ENCODE measurements at regions of chr6 and their contacts with region 1.

Region 1: DNA sequence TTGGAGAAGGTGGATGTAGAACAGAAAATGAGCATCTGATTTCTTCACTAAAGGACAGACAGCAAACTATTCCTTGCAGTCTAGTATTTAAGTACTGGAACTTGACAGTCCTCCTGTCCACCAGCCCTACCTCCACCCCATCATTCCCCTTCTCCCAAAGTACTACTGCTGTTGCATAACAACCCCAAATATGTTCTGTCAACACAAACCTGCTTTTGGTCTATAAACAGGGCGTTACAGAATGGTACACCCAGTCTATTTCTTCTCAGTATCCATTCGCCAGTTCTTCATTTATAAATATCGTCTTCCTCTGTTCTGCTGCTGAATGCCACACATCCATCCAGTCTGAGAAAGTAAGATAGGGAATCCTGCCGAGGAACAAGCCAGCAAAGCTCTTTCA is 27.7 kb upstream of the SLC22A1 start:
- DNase-seq: no peak
- ATAC-seq: no peak
- H3K4me3 Mint-ChIP-seq: no peak overlapping the region
- H3K27ac Mint-ChIP-seq: no peak overlapping the region
- H3K4me1 Mint-ChIP-seq: no peaks in the 10 kb centered on the region
- H3K27me3 Mint-ChIP-seq: no peaks in the 10 kb centered on the region
- CTCF ChIP-seq: no peak

Region 2: GRCh38 chr6:160076009-160076408 is 17.9 kb before region 1 on chr6:
- CTCF ChIA-PET with region 1: no interaction called
- POLR2A ChIA-PET with region 1: interaction called, 10 read pairs
- intact Hi-C with region 1: no loop called
- DNase-seq: no peak
- ATAC-seq: no peak
- H3K4me3 Mint-ChIP-seq: no peak overlapping the region
- H3K27ac Mint-ChIP-seq: no peak overlapping the region
- H3K4me1 Mint-ChIP-seq: peaks cover 8% of the 10 kb centered on the region
- H3K27me3 Mint-ChIP-seq: no peaks in the 10 kb centered on the region
- CTCF ChIP-seq: no peak